Lower leg skin (tissue), 4 donors: ENCODE measurements at regions of chr15 and their contacts with region 1.

Region 1: DNA sequence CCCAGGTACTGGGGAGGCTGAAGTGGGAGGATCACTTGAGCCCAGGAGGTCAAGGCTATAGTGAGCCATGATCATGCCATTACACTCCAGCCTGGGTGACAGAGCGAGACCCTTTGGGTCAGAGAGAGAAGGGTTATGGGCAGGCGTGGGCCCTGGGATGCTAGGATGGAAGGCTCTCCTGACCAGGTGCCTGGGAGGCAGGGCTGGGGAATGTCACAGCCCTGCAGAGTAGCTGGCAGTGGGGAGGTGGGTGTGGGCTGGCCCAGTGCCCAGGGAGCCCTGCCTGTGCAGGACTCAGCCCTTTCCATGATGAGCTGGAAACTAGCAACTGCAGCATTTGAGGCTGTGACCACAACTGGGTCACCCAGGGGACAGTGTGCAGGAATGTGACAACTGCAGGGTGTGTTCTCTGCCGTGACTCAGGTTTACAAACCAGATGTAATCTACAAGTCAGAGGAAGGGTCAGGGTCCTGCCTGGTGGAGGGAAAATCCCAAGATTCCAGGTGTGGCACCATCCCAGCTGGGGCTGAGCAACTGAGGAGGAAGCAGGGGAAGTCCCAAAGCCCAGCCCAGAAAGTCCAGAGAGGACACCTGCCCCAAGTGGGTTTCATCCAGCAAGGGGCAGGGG is 45.4 kb downstream of the SLC28A1 start:
- DNase-seq: no peak
- H3K4me3 ChIP-seq: no peak overlapping the region
- CTCF ChIP-seq: no peak
- POLR2A ChIP-seq: no peak

Region 2: GRCh38 chr15:84588053-84588874 is 341.6 kb before region 1 on chr15:
- intact Hi-C with region 1: loop called (anchors 5 kb)
- DNase-seq: peak; percentile 69 to 96
- H3K4me3 ChIP-seq: no peak overlapping the region
- CTCF ChIP-seq: no peak
- POLR2A ChIP-seq: no peak